Activated CD4-positive, alpha-beta memory T cell treated with anti-CD3 and anti-CD28 coated beads for 36 hours (primary cell): ENCODE measurements at regions of chr19 and their contacts with region 1.

Region 1: DNA sequence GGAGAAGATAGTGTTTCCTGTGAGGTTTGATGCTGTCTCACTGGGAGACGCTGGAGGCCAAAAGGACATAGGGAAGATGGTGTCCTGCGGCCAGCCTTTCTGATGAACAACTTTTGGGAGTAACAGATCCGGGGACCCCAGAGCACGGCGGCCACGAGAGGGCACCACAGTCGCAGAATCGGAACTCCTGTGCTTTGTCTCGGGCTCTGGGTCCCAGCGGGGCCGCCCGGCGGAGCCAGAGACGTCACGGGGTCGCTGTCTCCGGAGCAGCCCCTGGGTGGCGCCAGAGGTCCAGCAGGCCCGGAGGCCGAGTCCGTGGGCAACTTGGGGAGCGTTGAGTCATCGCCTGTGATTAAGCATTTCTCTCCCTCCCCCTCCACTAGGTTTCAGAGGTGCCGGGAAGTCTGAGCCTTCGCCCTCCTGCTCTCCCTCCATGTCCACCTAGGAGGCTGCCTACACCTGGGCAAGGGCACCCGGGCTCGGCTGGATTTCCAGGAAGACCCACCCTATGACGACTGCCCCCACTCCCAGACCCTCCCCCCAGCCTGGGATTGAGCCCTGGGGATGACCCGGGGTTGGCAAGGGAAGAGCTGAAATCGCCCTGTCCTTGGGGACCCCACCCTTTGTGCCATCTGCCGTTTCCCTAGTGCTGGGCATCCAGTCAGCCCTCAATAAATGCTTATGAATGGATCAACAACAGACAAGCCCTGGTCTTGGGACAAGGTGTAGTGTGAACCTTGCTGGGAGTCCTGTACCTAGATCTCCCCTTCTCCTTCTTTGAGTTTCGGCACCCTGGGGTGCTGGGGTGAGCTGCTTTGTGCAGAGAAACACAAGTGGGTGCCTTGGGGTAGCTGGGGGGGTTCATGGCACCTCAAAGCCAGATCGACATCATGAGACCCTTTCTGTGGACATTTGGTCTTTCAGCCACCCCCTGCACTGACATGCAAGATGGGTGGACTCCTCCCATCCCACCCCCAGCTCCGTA is 3.4 kb downstream of the NANOS3 start:
- DNase-seq: peak; percentile 99
- H3K4me3 Mint-ChIP-seq: peak overlapping the region; percentile 45
- H3K27ac Mint-ChIP-seq: peak overlapping the region; percentile 86
- H3K4me1 Mint-ChIP-seq: peaks cover 26% of the 10 kb centered on the region
- H3K27me3 Mint-ChIP-seq: no peaks in the 10 kb centered on the region

Region 2: GRCh38 chr19:13731147-13731964 is 149.0 kb before region 1 on chr19:
- CTCF ChIA-PET with region 1: no interaction called
- POLR2A ChIA-PET with region 1: no interaction called
- intact Hi-C with region 1: no loop called
- DNase-seq: peak; percentile 96
- H3K4me3 Mint-ChIP-seq: peak overlapping the region; percentile 79
- H3K27ac Mint-ChIP-seq: peak overlapping the region; percentile 96
- H3K4me1 Mint-ChIP-seq: peaks cover 22% of the 10 kb centered on the region
- H3K27me3 Mint-ChIP-seq: no peaks in the 10 kb centered on the region

Region 3: DNA sequence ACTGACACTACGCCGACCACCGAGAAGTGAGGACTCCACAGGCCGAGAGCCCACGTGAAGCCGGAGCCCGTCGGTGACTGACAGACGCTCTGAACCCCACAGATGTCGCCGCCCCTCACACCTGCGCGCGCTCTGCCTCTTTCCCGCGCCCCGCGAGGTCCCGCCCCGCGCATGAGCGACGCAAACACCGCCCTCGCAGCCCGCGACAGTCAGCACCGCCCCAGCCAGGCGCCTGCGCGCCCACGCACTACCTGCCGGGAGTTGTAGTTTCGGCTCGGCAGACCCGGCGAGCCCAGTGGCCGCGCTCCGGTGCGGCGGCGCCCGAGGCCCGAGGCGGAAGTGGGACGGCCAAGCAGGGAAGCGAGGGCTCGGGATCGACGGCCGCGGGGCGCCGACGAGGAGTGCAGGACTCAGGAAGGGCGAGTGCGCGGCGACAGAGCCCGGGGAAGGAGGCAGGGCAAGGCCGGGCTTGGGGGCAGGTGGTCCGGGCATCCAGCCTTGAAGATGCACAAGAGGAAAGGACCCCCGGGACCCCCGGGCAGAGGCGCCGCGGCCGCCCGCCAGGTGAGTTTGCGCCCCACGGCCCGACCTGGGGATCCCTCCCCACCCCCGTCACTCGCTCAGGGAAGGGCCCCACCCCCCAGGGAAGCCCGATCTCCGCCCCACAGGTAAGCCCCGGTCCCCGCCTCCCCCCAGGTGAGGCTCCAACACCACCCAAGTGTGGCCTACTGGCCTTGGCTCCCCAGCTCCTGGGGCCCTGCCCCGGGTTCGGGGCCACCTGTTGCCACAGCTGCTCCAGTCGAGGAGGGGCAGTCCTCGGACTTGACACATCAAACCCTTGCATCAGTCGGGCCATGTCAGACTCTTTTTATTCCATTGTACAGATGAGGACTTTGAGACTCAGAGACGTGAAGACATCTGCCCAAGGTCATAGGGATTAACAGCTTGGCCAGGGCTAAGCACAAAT is 25.9 kb after region 1 on chr19 and contains the starts of genes BRME1 and CC2D1A:
- CTCF ChIA-PET with region 1: interaction called, 16 read pairs
- POLR2A ChIA-PET with region 1: interaction called, 3 read pairs
- intact Hi-C with region 1: no loop called
- DNase-seq: peak; percentile 97
- H3K4me3 Mint-ChIP-seq: peak within 1 kb of the TSS; percentile 83
- H3K27ac Mint-ChIP-seq: peak within 1 kb of the TSS; percentile 86
- H3K4me1 Mint-ChIP-seq: peaks cover 23% of the 10 kb centered on the region
- H3K27me3 Mint-ChIP-seq: no peaks in the 10 kb centered on the region
- total RNA-seq, gene BRME1: 7.7 to 9.0 TPM
- total RNA-seq, gene CC2D1A: 25.8 to 31.0 TPM

Region 4: DNA sequence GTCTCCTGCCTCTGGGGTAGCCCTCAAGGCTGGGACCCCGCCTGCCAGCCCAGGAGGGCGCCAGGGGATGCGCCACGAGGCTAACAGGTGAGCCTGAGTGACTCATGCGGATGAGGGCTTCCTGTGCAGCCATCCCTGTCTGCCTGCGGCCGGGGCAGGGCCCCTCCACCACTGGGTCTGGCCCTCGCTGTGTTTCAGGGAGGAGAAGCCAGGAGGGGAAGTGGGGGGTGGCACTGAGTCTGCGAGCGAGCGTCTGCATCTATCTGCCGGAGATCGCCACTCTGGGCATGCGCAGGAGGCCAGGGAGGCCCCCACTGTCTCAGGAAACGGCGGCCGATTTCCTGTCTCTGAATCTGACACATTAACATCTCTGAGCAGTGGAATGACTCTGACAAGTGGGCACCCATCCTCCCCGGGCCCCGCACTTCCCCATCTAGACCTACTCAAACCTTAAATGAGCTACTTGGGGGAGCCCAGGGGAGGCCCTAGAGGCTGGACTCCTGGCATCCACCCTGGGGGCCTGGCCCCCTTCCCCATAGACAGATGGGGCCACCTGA is 106.1 kb after region 1 on chr19:
- CTCF ChIA-PET with region 1: interaction called, 3 read pairs
- POLR2A ChIA-PET with region 1: no interaction called
- intact Hi-C with region 1: loop called (anchors 10 kb)
- DNase-seq: peak; percentile 100
- H3K4me3 Mint-ChIP-seq: peak overlapping the region; percentile 62
- H3K27ac Mint-ChIP-seq: peak overlapping the region; percentile 97
- H3K4me1 Mint-ChIP-seq: peaks cover 58% of the 10 kb centered on the region
- H3K27me3 Mint-ChIP-seq: no peaks in the 10 kb centered on the region

Region 5: DNA sequence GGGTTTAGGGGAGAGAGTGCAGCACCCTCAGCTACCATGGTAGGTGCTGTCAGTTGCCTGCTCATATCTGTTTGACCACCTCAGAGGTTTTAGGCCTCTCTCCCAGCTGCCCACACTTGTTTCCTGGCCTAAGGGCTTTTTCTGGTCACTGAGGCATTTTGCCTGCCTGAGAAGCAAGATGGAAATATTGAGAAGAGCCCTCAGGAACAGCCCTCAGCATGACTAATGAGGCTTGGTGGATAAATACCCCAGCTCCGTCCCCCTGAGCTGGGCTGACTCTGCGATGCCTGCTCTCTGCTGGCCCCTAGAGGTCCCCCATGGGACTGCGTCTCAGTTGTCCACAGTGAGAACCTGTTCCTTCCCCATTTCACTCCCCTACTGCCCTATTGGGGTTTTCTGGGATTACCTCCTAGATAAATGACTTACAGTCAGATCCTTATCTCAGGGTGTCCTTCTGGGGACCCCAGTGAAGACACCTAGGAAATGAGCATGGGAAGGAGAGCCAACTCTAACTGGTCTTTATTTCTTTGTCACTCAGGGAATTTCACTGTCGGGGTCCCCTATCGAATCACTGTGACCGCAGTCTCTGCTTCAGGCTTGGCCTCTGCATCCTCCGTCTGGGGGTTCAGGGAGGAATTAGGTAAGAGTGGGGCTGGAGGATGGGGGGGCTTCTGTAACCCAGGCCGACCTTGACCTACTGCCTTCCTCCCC is 168.2 kb after region 1 on chr19:
- CTCF ChIA-PET with region 1: interaction called, 31 read pairs
- POLR2A ChIA-PET with region 1: no interaction called
- intact Hi-C with region 1: loop called (anchors 5 kb)
- DNase-seq: peak; percentile 83
- H3K4me3 Mint-ChIP-seq: no peak overlapping the region
- H3K27ac Mint-ChIP-seq: peak overlapping the region; percentile 51
- H3K4me1 Mint-ChIP-seq: peaks cover 4% of the 10 kb centered on the region
- H3K27me3 Mint-ChIP-seq: no peaks in the 10 kb centered on the region

Region 6: DNA sequence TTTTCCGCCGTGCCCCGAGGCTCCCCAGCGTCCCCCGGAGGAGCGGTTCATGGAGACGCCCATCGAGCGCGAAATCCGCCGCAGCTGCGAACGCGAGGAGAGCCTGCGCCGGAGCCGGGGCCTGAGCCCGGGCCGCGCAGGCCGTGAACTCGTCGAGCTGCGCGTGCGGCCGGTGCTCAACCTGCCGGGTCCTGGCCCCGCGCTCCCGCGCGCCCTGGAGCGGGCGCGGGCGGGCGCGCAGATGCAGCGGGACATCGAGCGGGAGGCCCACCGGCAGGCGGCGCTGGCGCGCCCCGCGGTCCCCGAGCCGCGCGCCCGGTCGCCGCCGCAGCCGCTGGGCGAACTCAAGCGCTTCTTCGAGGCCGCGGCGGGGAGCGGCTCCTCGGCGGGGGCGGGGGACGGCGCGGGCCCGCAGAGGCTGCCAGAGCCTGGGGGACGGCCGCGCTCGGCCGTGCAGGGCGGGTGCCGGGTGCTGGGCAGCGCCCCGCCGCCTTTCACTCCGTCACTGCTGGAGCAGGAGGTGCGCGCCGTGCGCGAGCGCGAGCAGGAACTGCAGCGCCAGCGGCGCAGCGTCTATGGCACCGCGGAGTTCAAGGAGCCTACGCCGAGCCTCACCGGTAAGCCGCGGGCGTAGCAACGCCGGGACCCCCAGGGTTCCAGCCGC is 193.0 kb after region 1 on chr19:
- CTCF ChIA-PET with region 1: interaction called, 65 read pairs
- POLR2A ChIA-PET with region 1: interaction called, 7 read pairs
- intact Hi-C with region 1: loop called (anchors 1 kb)
- DNase-seq: peak; percentile 80
- H3K4me3 Mint-ChIP-seq: peak overlapping the region; percentile 95
- H3K27ac Mint-ChIP-seq: peak overlapping the region; percentile 84
- H3K4me1 Mint-ChIP-seq: peaks cover 13% of the 10 kb centered on the region
- H3K27me3 Mint-ChIP-seq: no peaks in the 10 kb centered on the region

Region 7: GRCh38 chr19:14347999-14348889 is 467.9 kb after region 1 on chr19:
- CTCF ChIA-PET with region 1: interaction called, 3 read pairs
- POLR2A ChIA-PET with region 1: no interaction called
- intact Hi-C with region 1: loop called (anchors 5 kb)
- DNase-seq: peak; percentile 79
- H3K4me3 Mint-ChIP-seq: peak overlapping the region; percentile 55
- H3K27ac Mint-ChIP-seq: peak overlapping the region; percentile 45
- H3K4me1 Mint-ChIP-seq: peaks cover 22% of the 10 kb centered on the region
- H3K27me3 Mint-ChIP-seq: no peaks in the 10 kb centered on the region